Activated naive CD4-positive, alpha-beta T cell treated with anti-CD3 and anti-CD28 coated beads for 36 hours (primary cell): ENCODE measurements at regions of chr10 and their contacts with region 1.

Region 1: DNA sequence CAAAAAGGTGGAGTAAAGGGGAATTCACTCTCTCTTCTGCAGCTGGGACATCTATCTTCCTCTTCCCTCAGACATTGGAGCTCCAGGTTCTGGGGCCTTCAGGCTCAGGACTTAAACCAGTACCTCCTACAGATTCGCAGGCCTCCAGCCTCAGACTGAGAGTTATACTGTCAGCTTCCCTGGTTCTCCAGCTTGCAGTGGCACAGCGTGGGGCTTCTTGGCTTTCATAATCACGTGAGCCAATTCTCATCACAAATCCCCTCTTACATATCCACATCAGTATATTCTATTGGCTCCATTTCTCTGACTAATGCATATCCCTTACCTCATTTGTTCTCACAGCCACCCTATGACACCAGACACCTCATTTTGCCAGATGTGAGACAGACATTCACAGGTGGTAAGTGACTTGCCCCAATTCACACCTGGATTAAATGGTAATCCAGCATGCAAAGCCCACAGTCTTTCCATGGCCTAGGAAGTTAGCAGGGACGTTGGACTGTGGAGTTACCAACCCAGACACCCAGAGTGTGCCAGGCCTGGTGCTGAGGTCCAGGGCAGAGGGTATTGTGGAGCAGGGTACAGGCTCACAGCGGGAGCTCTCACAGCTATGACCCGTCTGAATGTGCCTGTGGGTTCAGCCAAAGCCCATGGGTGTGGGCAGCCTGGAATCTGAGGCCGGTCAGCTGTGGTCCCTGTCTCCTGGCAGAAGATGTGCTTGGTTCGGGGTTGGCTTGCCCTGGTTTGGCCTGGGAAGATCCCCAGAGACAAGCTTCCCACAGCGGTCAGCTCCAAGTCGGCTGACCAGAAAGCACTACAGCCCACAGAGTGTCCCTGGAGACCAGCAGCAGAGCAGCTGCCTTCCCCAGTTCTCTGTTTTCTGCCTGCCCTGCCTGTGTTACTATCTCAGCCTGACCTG is 18.4 kb upstream of the ZCCHC24 start:
- DNase-seq: no peak
- H3K4me3 Mint-ChIP-seq: no peak overlapping the region
- H3K27ac Mint-ChIP-seq: no peak overlapping the region
- H3K4me1 Mint-ChIP-seq: no peaks in the 10 kb centered on the region
- H3K27me3 Mint-ChIP-seq: peaks cover 2% of the 10 kb centered on the region

Region 2: DNA sequence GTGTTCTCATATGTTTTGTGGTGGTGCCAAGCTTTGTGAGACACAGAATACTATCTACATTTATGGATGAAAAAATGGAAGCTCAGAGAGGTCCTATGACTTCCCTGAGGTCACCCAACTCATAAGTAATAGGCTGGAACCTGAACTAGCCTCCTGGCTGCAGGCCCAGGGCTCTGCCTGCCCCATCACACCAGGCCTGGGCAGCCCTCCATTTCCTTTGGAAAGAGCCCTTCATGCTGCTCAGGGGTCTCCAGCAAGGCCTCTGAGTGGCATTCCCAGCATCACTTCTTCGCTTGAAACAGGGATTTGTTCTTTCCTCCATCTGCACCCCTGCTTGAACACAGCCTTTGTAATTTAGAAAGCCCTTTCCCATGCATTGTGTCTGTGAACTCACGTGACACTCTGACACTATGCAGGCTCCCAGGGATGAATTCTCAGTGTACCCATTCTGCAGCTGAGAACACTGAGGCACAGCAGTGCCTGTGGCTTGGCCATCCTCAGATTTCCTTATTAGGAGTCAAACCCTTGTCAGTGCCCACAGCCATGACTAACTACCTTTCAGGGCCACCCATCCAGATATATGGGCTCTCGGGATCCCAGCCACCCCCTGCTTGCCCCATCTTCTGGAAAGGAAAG is 244.4 kb before region 1 on chr10:
- CTCF ChIA-PET with region 1: no interaction called
- intact Hi-C with region 1: loop called (anchors 10 kb)
- DNase-seq: no peak
- H3K4me3 Mint-ChIP-seq: no peak overlapping the region
- H3K27ac Mint-ChIP-seq: no peak overlapping the region
- H3K4me1 Mint-ChIP-seq: no peaks in the 10 kb centered on the region
- H3K27me3 Mint-ChIP-seq: no peaks in the 10 kb centered on the region

Region 3: GRCh38 chr10:79292891-79293746 is 170.7 kb before region 1 on chr10:
- CTCF ChIA-PET with region 1: no interaction called
- intact Hi-C with region 1: loop called (anchors 2 kb)
- DNase-seq: peak; percentile 51
- H3K4me3 Mint-ChIP-seq: no peak overlapping the region
- H3K27ac Mint-ChIP-seq: no peak overlapping the region
- H3K4me1 Mint-ChIP-seq: peaks cover 8% of the 10 kb centered on the region
- H3K27me3 Mint-ChIP-seq: no peaks in the 10 kb centered on the region

Region 4: GRCh38 chr10:79374312-79375191 is 89.3 kb before region 1 on chr10:
- CTCF ChIA-PET with region 1: interaction called, 58 read pairs
- intact Hi-C with region 1: loop called (anchors 1 kb)
- DNase-seq: peak; percentile 85
- H3K4me3 Mint-ChIP-seq: no peak overlapping the region
- H3K27ac Mint-ChIP-seq: no peak overlapping the region
- H3K4me1 Mint-ChIP-seq: peaks cover 2% of the 10 kb centered on the region
- H3K27me3 Mint-ChIP-seq: no peaks in the 10 kb centered on the region

Region 5: GRCh38 chr10:79400146-79401004 is 63.5 kb before region 1 on chr10:
- CTCF ChIA-PET with region 1: interaction called, 5 read pairs
- intact Hi-C with region 1: loop called (anchors 1 kb)
- DNase-seq: peak; percentile 69
- H3K4me3 Mint-ChIP-seq: no peak overlapping the region
- H3K27ac Mint-ChIP-seq: no peak overlapping the region
- H3K4me1 Mint-ChIP-seq: no peaks in the 10 kb centered on the region
- H3K27me3 Mint-ChIP-seq: no peaks in the 10 kb centered on the region

Region 6: DNA sequence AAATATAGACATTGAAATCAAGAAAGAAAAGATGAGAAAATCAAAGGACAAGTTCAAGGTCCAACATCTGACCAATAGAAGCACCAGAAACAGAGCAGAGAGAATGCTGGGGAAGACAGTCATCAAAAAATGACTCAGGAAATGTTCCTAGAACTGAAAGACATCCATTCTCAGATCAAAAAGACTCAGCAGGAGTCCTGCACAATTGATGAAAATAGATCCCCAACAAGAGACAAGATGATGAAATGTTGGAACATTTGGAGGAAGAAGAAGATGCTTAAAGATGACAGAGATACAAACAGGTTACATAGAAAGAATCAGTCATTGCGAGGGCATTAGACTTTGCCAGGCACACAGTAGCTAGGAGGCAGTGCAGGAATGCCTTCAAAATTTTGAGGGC is 18.5 kb after region 1 on chr10:
- CTCF ChIA-PET with region 1: interaction called, 11 read pairs
- intact Hi-C with region 1: no loop called
- DNase-seq: no peak
- H3K4me3 Mint-ChIP-seq: no peak overlapping the region
- H3K27ac Mint-ChIP-seq: no peak overlapping the region
- H3K4me1 Mint-ChIP-seq: no peaks in the 10 kb centered on the region
- H3K27me3 Mint-ChIP-seq: no peaks in the 10 kb centered on the region

Region 7: GRCh38 chr10:79496896-79497295 is 33.1 kb after region 1 on chr10:
- CTCF ChIA-PET with region 1: no interaction called
- intact Hi-C with region 1: no loop called
- DNase-seq: no peak
- H3K4me3 Mint-ChIP-seq: no peak overlapping the region
- H3K27ac Mint-ChIP-seq: no peak overlapping the region
- H3K4me1 Mint-ChIP-seq: no peaks in the 10 kb centered on the region
- H3K27me3 Mint-ChIP-seq: peaks cover 11% of the 10 kb centered on the region